ENCODE measurements at regions of chr2 and their contacts with region 1.

Region 1: DNA sequence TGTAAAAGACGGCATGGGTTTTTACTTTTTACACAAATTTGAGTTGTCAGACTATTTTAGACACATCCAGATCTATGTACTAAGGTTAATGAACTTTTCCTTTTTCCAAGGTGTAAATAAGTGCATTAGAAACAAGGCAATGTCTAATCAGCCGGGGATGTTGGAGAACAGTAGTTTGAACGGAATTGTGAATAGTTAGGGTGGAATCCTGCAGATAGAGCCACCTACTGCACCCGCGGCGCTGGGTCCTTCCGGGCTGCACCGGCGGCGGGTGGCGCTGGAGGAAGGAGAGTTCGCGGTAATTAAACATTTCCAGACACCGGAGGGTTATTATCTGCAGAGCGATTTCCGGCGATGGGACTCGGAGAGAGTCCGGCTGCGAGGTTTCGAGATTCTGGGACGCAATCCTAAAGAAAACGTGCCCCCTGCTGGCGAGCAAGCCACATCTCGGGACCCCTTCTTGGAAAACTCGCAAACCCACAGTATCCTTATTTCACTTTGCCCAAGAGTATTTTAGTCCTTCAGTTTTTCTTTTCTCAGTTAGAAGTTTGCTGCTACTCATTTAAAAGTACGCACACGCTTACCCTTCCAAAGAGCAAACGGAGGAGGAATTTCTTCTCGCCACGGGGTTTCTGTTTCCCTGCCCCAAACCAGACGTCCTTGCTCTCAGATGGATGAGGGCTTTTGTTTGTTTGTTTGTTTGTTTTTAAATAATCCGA is 4.5 kb upstream of the OSR1 start:
- DNase-seq: peak in 5 of 6 donors; percentile 59 to 83 (median 76)
- ATAC-seq: peak; percentile 76 to 84 (median 80)
- H3K4me3 ChIP-seq: peak overlapping the region; percentile 16 to 62 (median 36)
- H3K27ac ChIP-seq: peak overlapping the region in 1 of 4 donors; percentile 23
- H3K4me1 ChIP-seq: no peaks in the 10 kb centered on the region
- H3K27me3 ChIP-seq: peaks cover 0 to 36% (median 1%) of the 10 kb centered on the region in 4 donors
- CTCF ChIP-seq: peak; percentile 48 to 73 (median 62)

Region 2: GRCh38 chr2:18520451-18521425 is 842.2 kb before region 1 on chr2:
- intact Hi-C with region 1: loop called in 1 of 3 experiments (anchors 10 kb)
- DNase-seq: peak; percentile 50 to 92 (median 78)
- ATAC-seq: peak; percentile 87 to 97 (median 94)
- H3K4me3 ChIP-seq: no peak overlapping the region
- H3K27ac ChIP-seq: no peak overlapping the region
- H3K4me1 ChIP-seq: peaks cover 0 to 4% (median 0%) of the 10 kb centered on the region in 3 donors
- H3K27me3 ChIP-seq: no peaks in the 10 kb centered on the region
- CTCF ChIP-seq: peak; percentile 71 to 83 (median 82)

Region 3: GRCh38 chr2:18749912-18750526 is 612.9 kb before region 1 on chr2:
- intact Hi-C with region 1: loop called in 2 of 3 experiments (anchors 10 kb)
- DNase-seq: peak in 3 of 6 donors; percentile 7 to 61 (median 35)
- ATAC-seq: peak in 3 of 4 donors; percentile 58 to 72 (median 70)
- H3K4me3 ChIP-seq: no peak overlapping the region
- H3K27ac ChIP-seq: no peak overlapping the region
- H3K4me1 ChIP-seq: no peaks in the 10 kb centered on the region
- H3K27me3 ChIP-seq: no peaks in the 10 kb centered on the region
- CTCF ChIP-seq: peak in 3 of 4 donors; percentile 43 to 60 (median 48)

Region 4: GRCh38 chr2:19863303-19864041 is 500.6 kb after region 1 on chr2:
- intact Hi-C with region 1: loop called in 2 of 3 experiments (anchors 10 kb)
- DNase-seq: peak; percentile 37 to 91 (median 72)
- ATAC-seq: peak; percentile 90 to 97 (median 94)
- H3K4me3 ChIP-seq: peak overlapping the region in 1 of 4 donors; percentile 29
- H3K27ac ChIP-seq: no peak overlapping the region
- H3K4me1 ChIP-seq: peaks cover 0 to 4% (median 0%) of the 10 kb centered on the region in 3 donors
- H3K27me3 ChIP-seq: no peaks in the 10 kb centered on the region
- CTCF ChIP-seq: peak; percentile 91 to 96 (median 94)